Gastrocnemius medialis (tissue), 4 donors: ENCODE measurements at regions of chr10 and their contacts with region 1.

Region 1: DNA sequence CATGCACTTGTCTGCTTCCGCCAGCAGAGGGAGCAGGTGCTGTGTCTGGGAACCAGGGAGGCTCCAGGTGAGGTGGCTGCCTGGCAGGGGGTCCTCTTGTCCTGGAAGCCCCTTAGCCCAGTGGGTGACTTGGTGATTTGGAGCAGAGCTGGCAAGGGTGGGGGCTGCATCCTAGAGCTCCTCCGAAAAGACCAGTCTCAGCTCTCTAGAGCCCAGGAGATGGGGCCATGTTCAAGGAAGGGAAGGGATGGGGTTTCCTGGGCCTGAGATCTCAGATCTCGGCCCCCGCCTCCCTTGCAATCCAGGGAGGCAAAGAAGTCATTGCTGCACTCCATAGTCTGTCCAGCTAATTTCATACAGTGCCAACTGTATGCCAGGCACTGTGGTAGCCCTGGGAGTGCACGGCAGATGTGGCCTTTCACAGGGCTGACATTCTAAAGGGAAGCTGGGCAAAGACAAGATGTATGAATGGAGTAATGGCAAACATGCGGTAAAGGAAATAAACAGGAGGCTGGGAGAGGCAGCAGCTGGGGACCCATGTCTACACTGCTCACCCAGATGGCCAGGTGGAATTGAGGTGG is 20.4 kb upstream of the SFRP5 start:
- DNase-seq: peak; percentile 40 to 62
- ATAC-seq: peak; percentile 67 to 82
- H3K4me3 ChIP-seq: no peak overlapping the region
- H3K27ac ChIP-seq: no peak overlapping the region
- H3K4me1 ChIP-seq: peaks cover 0 to 5% of the 10 kb centered on the region in 2 donors
- H3K27me3 ChIP-seq: no peaks in the 10 kb centered on the region
- CTCF ChIP-seq: peak; percentile 87 to 96 (median 94)
- POLR2A ChIP-seq: no peak

Region 2: GRCh38 chr10:97827778-97828291 is 35.6 kb after region 1 on chr10:
- in situ Hi-C with region 1: no loop called
- intact Hi-C with region 1: no loop called
- DNase-seq: no peak
- ATAC-seq: no peak
- H3K4me3 ChIP-seq: no peak overlapping the region
- H3K27ac ChIP-seq: peak overlapping the region in 3 of 4 donors; percentile 11 to 60 (median 43)
- H3K4me1 ChIP-seq: peaks cover 8 to 42% of the 10 kb centered on the region in 2 donors
- H3K27me3 ChIP-seq: no peaks in the 10 kb centered on the region
- CTCF ChIP-seq: no peak
- POLR2A ChIP-seq: no peak

Region 3: DNA sequence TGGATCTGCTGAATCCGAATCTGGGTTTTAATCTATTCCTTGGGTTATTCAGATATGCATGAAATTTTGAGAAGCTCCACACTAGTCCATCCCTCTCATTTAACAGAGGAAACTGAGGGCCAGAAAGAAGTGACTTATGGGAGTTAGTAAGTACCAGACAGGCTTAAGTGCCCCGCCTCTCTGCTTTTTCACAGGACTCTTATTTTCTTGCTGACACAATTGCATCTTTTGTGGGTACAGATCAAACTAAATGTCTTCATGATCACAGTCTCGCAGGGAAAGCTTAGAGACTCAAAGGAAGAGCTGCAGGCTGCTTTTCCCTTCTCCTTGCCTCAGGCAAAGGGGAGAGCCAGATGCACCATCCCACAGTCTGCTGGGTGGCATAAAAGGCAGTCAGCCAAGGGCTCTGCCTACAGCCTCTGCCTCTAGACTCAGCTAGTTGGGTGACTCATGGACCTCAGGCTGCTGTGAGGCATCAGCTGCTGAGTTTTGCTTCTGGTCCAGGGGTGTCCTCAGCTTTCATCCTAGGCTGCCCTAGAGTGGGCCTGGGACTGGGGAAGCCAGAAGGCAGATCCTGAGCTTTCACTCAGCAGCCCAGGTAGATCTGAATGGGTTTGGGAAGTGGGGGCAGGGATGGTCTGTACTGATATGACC is 69.0 kb after region 1 on chr10:
- in situ Hi-C with region 1: loop called in 1 of 4 experiments (anchors 5 kb)
- intact Hi-C with region 1: no loop called
- DNase-seq: peak; percentile 51 to 54
- ATAC-seq: peak; percentile 83 to 98
- H3K4me3 ChIP-seq: no peak overlapping the region
- H3K27ac ChIP-seq: peak overlapping the region in 2 of 4 donors; percentile 28 to 52
- H3K4me1 ChIP-seq: peaks cover 0 to 7% of the 10 kb centered on the region in 2 donors
- H3K27me3 ChIP-seq: no peaks in the 10 kb centered on the region
- CTCF ChIP-seq: no peak
- POLR2A ChIP-seq: no peak

Region 4: DNA sequence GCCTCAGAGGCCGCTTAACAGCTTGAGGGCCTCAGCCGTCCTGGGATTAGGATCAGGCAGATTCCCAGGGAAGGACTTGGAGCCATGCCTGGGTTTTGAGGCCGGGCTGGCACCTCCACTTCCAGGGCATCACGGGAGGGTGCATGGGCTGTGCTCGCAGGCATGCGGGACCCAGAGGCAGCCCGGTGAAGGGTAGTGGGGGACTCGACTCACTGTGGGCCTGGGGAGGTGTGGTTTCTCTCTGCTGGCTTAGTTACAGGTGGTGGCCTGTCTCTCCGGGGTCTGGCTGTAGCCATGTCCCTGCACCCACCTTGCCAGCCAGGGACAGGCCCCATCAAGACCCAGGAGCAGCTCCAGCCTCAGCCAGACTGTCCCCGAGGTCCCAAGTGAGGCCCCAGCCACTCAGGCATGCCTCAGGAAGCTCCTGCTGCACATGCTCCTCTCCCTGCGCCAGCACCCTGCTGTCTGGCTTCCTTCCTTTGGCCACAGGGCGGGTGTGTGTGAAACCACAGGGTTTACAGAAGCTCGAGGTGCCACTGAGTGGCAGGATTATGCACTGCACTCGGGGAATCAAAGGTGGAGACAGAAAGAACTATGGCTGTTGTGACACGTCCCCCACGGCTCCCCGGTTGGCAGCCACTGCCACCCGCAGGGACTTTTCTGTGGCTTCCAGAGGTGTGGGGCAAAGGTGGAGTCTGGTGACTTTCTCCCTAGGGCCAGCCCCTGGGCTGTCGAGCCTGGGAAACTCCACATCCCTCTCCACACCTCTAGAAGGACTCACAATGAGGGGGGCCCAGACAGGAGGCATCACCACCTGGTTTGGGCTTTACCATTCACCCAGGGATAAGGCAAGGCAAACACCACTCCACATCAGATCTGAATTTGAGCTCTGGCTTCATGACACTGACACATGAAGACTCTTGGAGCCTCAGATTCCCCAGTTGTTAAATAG is 77.1 kb after region 1 on chr10:
- in situ Hi-C with region 1: loop called (anchors 5 kb)
- intact Hi-C with region 1: loop called (anchors 1 kb)
- DNase-seq: peak; percentile 88 to 92
- ATAC-seq: peak; percentile 98 to 99
- H3K4me3 ChIP-seq: no peak overlapping the region
- H3K27ac ChIP-seq: peak overlapping the region in 2 of 4 donors; percentile 33 to 63
- H3K4me1 ChIP-seq: peaks cover 4 to 6% of the 10 kb centered on the region in 2 donors
- H3K27me3 ChIP-seq: peaks cover 0 to 4% (median 0%) of the 10 kb centered on the region in 3 donors
- CTCF ChIP-seq: peak; percentile 86 to 97 (median 91)
- POLR2A ChIP-seq: no peak

Region 5: DNA sequence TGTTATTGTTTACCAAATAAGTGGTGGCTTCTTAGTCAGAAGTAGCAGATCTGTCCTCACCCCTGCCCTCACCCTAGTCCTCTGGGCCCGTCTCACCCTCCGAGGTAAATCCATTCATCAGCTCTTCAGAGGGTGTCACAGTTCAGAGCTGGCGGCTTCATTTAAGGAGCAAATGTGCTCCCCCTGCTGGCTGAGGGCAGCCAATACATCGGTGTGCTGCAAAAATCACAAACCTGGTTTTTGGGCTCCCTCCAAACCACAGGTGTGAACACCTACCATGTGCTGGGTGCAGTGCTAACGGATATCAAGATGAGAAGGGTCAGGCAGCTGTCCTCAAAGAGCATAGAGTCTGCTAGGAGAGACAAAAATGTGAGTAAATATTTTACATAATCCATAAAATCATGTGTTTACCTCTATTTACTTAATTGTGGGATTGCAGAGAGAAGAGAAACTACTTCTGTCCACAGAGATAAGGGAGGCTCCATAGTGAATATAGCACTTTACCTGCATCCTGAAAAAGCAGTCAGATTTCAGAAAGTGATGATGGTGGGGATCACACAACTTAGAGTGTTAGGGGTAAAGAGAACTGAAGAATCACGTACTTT is 253.7 kb after region 1 on chr10:
- in situ Hi-C with region 1: loop called in 1 of 4 experiments (anchors 25 kb)
- intact Hi-C with region 1: loop called (anchors 10 kb)
- DNase-seq: peak in 1 of 2 donors; percentile 34
- ATAC-seq: peak; percentile 57 to 74
- H3K4me3 ChIP-seq: no peak overlapping the region
- H3K27ac ChIP-seq: no peak overlapping the region
- H3K4me1 ChIP-seq: no peaks in the 10 kb centered on the region
- H3K27me3 ChIP-seq: peaks cover 0 to 13% (median 0%) of the 10 kb centered on the region in 3 donors
- CTCF ChIP-seq: peak; percentile 48 to 87 (median 72)
- POLR2A ChIP-seq: no peak